Left lung (tissue), 14 donors: ENCODE measurements at regions of chr10 and their contacts with region 1.

Region 1: GRCh38 chr10:60964257-60965235 is 20.6 kb upstream of the RHOBTB1 start:
- DNase-seq: peak in 3 of 4 donors; percentile 48 to 85 (median 79)
- ATAC-seq: peak; percentile 98
- H3K4me3 ChIP-seq: no peak overlapping the region
- H3K27ac ChIP-seq: peak overlapping the region; percentile 52 to 67
- H3K4me1 ChIP-seq: peaks cover 0 to 25% of the 10 kb centered on the region in 2 donors
- H3K27me3 ChIP-seq: no peaks in the 10 kb centered on the region
- CTCF ChIP-seq: peak; percentile 69 to 81

Region 2: DNA sequence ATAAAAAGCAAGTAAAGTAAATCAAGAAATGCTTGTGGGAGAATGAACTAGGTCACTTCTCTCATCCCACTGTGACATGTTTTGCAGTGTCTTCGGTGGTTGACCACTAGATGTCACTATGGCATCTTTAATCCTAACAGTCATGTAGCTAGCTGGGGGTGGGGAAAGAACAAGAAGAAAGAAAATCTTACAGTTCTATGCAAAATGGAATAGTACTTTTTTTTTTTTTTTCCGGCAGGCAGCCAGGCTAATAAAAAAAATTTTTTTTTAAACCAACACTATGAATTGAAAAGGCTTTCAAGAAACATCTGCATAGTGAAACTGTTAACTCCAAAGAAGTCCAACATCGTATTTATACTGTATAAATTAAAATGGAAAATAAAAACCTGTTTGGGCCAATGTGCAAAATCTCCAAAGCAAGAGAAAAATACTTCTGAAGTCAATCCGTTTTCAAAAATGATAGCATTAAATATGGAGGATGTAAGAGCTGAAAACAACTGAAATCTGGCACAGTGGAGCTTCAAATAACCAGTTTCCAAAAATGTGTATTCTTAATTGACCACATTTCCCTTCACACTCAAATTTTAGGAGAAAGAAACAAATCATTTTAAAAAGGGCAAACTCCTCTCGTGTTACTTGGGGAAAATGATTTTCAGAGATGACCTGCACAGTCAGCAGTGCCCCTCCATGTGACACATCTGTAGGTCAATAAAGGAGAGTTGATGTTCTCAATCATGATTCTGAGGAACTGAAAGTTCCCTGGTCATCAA is 147.7 kb before region 1 on chr10:
- intact Hi-C with region 1: loop called (anchors 5 to 10 kb)
- DNase-seq: peak in 2 of 4 donors; percentile 92 to 95
- ATAC-seq: peak; percentile 97
- H3K4me3 ChIP-seq: no peak overlapping the region
- H3K27ac ChIP-seq: peak overlapping the region in 1 of 2 donors; percentile 41
- H3K4me1 ChIP-seq: peaks cover 0 to 10% of the 10 kb centered on the region in 2 donors
- H3K27me3 ChIP-seq: no peaks in the 10 kb centered on the region
- CTCF ChIP-seq: peak; percentile 58 to 78

Region 3: DNA sequence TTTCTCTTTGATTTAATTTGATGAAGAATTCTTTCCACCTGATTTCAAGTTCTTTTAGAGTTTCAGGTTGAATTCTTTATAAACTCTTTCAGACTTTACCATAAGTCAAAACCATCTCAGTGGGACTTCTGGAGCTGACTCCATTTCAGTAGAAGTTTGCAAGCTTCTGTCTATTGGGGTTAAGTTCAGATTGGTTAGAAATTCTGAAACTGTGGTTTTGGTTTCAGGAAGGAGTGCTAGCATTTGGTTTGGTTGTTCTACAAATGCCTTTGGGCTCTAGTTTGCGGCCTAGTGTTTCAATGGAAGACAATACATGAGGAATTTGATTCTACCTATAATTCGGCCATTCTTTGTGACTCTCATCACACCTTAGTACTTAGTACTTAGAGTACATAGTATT is 156.3 kb after region 1 on chr10:
- intact Hi-C with region 1: no loop called
- DNase-seq: no peak
- ATAC-seq: no peak
- H3K4me3 ChIP-seq: no peak overlapping the region
- H3K27ac ChIP-seq: no peak overlapping the region
- H3K4me1 ChIP-seq: no peaks in the 10 kb centered on the region
- H3K27me3 ChIP-seq: no peaks in the 10 kb centered on the region
- CTCF ChIP-seq: no peak

Region 4: DNA sequence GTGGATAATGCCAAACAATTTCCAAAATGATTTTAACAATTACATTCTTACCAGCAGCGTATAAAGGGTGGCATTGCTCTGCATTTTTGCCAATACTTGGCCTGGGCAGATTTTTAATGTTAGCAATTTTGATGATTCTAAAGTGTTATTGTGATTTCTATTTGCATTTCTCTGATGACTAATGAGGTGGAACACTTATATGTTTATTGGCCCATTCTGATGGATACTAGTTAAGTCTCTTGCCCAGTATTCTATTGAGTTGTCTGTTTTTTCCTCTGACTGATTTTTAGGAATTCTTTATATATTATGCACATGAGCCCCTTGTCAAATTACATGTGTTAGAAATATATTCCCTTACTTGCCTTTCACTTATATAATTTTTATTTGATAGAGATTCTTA is 401.8 kb after region 1 on chr10:
- intact Hi-C with region 1: no loop called
- DNase-seq: no peak
- ATAC-seq: no peak
- H3K4me3 ChIP-seq: no peak overlapping the region
- H3K27ac ChIP-seq: no peak overlapping the region
- H3K4me1 ChIP-seq: no peaks in the 10 kb centered on the region
- H3K27me3 ChIP-seq: no peaks in the 10 kb centered on the region
- CTCF ChIP-seq: no peak